Left colon (tissue), 2 donors: ENCODE measurements at regions of chr3 and their contacts with region 1.

Region 1: GRCh38 chr3:98602078-98602678 is 8.8 kb upstream of the CPOX start:
- DNase-seq: no peak
- ATAC-seq: peak; percentile 71

Region 2: DNA sequence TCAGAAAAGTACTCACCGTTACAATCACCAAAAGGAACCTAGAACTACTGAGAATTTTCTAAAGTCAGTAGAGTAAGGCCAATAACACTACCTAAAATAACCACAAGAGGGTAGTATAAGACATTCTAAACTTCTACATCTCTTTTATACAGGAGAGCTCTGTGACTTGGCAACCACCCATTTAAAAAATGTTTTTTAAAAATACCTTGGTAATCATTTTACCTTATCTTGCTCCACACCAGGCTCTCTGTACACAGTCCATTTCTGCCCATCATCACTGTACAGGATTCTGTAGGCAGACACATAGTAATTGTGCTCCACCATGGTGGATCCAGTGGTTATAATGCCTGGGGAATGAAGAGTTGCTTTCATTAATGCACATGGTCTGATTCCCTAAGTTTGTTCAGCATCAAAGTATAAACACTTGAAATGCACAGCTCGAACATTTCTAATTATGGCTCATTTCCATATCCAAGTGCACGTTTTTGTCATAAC is 215.4 kb after region 1 on chr3:
- intact Hi-C with region 1: loop called in 1 of 2 experiments (anchors 5 kb)
- DNase-seq: no peak
- ATAC-seq: peak; percentile 73

Region 3: GRCh38 chr3:99313485-99313884 is 711.3 kb after region 1 on chr3:
- intact Hi-C with region 1: no loop called
- DNase-seq: no peak
- ATAC-seq: no peak